Transverse colon (tissue), 4 donors: ENCODE measurements at regions of chr16 and their contacts with region 1.

Region 1: DNA sequence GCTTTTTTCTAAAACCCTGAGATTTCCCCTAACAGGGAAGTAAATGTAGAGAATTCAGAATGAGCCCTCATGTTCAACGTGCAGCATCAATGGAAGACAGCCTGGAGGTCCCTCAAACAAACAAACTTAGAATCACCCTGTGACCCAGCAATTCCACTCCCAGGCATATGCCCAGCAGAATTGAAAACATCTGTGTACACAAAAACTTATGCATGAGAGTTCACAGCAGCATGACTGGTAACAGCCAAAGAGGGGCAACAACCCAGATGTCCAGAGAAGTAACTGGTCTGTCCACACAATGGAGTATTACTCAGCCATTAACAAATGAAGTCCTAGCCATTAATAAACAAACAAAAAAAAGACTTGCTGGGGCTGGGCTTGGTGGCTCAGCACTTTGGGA is 252.7 kb downstream of the PARN start:
- DNase-seq: no peak
- H3K4me3 ChIP-seq: no peak overlapping the region
- H3K27ac ChIP-seq: no peak overlapping the region
- H3K4me1 ChIP-seq: no peaks in the 10 kb centered on the region
- H3K27me3 ChIP-seq: no peaks in the 10 kb centered on the region
- CTCF ChIP-seq: no peak
- EP300 ChIP-seq: no peak
- POLR2A ChIP-seq: no peak

Region 2: DNA sequence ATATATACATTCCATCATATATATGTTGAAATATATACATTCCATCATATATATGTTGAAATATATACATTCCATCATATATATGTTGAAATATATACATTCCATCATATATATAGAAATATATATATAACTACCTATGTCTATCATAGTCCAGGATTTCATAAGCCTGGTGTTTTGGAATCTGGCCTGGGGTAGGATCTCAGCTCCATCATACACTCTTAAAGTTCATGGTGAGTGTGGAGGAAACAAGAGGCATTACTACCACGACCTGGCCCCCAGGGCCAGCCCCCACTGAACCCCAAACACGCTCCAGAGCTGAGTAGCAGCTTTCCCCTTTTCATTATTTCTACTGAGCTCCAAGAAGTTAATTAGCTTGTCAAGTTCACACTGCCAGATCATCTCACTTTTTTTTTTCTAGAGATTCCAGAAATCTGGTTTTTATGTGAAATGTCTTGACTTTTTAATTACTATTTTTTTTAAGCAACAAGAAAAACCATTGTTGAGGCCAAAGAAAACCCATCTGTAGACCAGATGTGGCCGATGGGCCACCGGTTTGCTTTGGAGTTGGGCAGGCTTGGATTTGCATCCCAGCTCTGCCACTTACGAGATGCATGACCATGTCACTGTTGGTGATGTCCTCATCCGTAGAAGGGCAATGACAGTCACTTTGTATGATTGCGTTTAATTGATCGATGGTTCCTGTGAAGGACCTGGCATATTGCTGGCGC is 340.6 kb before region 1 on chr16:
- in situ Hi-C with region 1: no loop called
- intact Hi-C with region 1: no loop called
- DNase-seq: no peak
- H3K4me3 ChIP-seq: no peak overlapping the region
- H3K27ac ChIP-seq: no peak overlapping the region
- H3K4me1 ChIP-seq: no peaks in the 10 kb centered on the region
- H3K27me3 ChIP-seq: no peaks in the 10 kb centered on the region
- CTCF ChIP-seq: no peak
- EP300 ChIP-seq: no peak
- POLR2A ChIP-seq: no peak

Region 3: GRCh38 chr16:14337303-14338191 is 39.8 kb before region 1 on chr16:
- in situ Hi-C with region 1: no loop called
- intact Hi-C with region 1: no loop called
- DNase-seq: no peak
- H3K4me3 ChIP-seq: no peak overlapping the region
- H3K27ac ChIP-seq: no peak overlapping the region
- H3K4me1 ChIP-seq: peaks cover 0 to 4% (median 0%) of the 10 kb centered on the region in 4 donors
- H3K27me3 ChIP-seq: no peaks in the 10 kb centered on the region
- CTCF ChIP-seq: no peak
- EP300 ChIP-seq: no peak
- POLR2A ChIP-seq: no peak

Region 4: GRCh38 chr16:14350081-14350480 is 27.2 kb before region 1 on chr16:
- in situ Hi-C with region 1: no loop called
- intact Hi-C with region 1: loop called (anchors 1 kb)
- DNase-seq: no peak
- H3K4me3 ChIP-seq: no peak overlapping the region
- H3K27ac ChIP-seq: no peak overlapping the region
- H3K4me1 ChIP-seq: no peaks in the 10 kb centered on the region
- H3K27me3 ChIP-seq: no peaks in the 10 kb centered on the region
- CTCF ChIP-seq: no peak
- EP300 ChIP-seq: no peak
- POLR2A ChIP-seq: no peak

Region 5: DNA sequence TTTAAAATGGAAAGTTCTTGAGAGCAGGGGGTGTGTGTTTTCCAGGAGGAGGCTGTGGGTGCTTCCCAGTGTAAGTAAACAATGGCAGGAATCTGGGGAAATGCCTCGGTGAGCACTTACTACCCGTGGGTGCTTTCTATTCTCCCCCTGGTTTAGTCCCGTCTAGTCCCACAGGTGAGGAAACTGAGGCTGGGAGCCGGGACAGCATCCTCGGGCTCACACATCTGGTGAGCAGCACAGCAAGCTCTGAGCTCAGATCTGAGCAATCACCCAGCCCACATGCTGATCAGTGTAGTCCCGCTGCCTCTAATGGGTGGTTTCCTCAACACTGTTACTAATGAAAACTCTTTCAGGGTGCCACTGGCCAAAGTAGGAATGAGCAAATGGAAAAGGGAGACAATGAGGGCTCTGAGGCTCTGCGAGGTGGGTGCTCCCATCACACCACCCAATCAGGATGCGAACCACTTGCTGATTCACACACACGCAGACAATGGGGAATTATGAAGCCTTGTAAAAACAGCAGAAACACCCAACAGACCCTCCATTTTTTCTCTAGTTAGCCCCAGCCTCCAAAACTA is 50.1 kb after region 1 on chr16:
- in situ Hi-C with region 1: no loop called
- intact Hi-C with region 1: no loop called
- DNase-seq: no peak
- H3K4me3 ChIP-seq: no peak overlapping the region
- H3K27ac ChIP-seq: no peak overlapping the region
- H3K4me1 ChIP-seq: no peaks in the 10 kb centered on the region
- H3K27me3 ChIP-seq: no peaks in the 10 kb centered on the region
- CTCF ChIP-seq: no peak
- EP300 ChIP-seq: no peak
- POLR2A ChIP-seq: no peak